ENCODE measurements at regions of chr15 and their contacts with region 1.

Region 1: GRCh38 chr15:65028921-65029735 is at the start of gene MTFMT:
- DNase-seq: peak; percentile 93 to 95
- ATAC-seq: peak; percentile 94 to 98 (median 97)
- H3K4me3 ChIP-seq: peak within 1 kb of the TSS; percentile 45 to 99 (median 94)
- H3K27ac ChIP-seq: peak within 1 kb of the TSS; percentile 8 to 89 (median 84)
- H3K4me1 ChIP-seq: peaks cover 2 to 34% (median 17%) of the 10 kb centered on the region in 9 donors
- H3K27me3 ChIP-seq: no peaks in the 10 kb centered on the region
- CTCF ChIP-seq: peak in 1 of 9 donors; percentile 10
- total RNA-seq, gene MTFMT: 13.5 to 21.9 (median 18.6) TPM

Region 2: DNA sequence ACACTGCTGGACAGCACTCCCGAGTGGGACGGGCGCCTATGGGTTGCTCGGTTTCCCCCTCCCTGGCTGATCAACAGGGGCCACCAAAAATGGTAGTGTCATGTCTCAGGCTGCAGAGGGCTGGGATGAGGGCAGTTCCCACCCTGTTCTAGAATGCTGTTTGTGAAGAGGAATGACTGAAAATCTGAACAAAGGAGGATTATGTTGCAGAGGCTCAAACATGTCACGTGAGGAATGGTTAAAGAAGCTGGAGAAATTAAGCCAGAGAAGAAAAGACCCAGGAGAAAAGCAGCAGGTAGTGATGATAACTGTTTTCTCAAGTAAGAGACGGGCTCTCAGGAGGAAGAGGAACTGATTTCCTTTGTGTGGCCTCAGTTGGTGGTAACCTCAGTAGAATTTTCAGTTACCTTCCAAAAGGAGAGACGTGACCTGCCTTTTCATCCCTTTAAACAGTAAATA is 49.8 kb before region 1 on chr15:
- intact Hi-C with region 1: no loop called
- DNase-seq: no peak
- ATAC-seq: no peak
- H3K4me3 ChIP-seq: no peak overlapping the region
- H3K27ac ChIP-seq: no peak overlapping the region
- H3K4me1 ChIP-seq: peaks cover 0 to 14% (median 0%) of the 10 kb centered on the region in 9 donors
- H3K27me3 ChIP-seq: no peaks in the 10 kb centered on the region
- CTCF ChIP-seq: no peak

Region 3: DNA sequence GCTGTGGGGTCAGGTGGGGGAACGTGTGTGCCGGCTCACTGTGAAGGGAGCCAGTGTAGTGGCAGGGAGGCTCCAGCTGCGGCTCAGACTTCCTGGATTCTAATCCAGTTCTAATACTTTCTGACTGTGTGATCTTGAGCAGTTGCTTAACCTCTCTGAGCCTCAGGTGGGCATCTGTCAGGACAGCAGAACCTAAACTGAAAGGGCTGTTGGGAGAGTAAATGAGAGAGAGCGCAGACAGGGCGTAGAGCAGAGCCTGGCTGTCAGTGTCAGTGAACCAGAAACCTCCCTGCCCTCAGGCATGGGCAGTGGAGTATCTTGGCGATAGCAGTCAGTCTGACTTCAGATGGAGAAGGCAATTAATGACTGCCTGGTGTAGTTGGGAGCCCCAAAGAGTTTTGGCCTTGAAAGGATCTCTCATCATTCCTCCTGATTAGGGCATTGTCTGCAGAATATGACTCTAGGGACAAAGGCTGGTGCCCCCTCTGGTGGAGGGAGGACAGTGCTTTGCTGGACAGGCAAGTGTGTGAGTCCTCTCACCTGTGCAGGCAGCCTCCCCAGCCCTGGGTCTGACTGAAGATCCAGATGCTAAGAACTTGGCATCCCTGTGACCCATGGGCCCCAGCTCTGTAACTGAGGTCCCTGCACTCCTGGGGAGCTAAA is 57.0 kb after region 1 on chr15:
- intact Hi-C with region 1: loop called in 5 of 10 experiments (anchors 5 to 10 kb)
- DNase-seq: no peak
- ATAC-seq: no peak
- H3K4me3 ChIP-seq: no peak overlapping the region
- H3K27ac ChIP-seq: peak overlapping the region in 8 of 10 donors; percentile 76 to 94 (median 88)
- H3K4me1 ChIP-seq: peaks cover 14 to 90% (median 62%) of the 10 kb centered on the region in 9 donors
- H3K27me3 ChIP-seq: peaks cover 0 to 12% (median 0%) of the 10 kb centered on the region in 7 donors
- CTCF ChIP-seq: peak in 6 of 9 donors; percentile 35 to 53 (median 40)

Region 4: DNA sequence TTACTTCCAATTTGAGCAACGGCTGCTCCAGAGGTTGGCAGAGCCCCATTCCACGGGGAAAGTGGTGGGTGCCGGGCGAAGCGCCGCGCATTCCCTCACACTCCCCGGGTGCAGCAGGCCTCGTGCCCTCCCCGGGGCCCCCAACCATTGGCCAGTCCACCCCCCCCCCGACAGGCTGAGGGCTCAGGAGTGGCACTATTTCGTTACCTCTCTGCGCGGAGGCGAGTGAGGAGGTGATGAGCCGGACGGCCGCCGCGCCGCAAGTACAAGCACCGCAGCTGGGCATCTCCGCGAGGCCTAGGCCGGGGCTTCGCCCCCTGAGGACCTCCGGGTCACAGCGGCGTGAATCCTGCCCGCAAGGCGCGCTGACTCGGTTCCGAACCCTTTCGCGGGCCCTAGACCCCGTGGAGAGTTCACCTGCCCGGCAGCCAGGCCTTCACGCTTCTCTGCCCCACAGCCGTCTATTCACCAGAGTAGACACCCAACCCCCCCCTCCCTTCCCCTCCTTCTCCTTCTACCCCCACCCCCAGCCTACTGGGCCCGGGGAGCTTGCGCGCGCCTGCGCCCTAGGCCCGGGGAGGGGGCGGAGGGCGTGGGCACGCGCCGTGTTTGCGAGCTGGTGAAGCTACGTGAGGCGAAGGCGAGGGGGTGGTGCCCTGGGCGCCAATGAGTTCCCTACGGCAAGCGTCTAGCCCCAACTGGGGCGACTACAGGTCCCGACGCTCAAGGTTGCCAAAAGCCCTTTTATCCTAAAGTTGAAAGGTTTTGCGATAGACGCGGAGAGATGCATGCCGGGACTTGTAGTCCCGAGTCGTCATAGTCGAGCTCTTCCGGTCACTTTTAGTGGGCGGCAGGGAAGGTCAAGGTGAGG is 156.0 kb after region 1 on chr15 and contains the start of gene CLPX:
- intact Hi-C with region 1: loop called in 1 of 10 experiments (anchors 5 kb)
- DNase-seq: peak; percentile 91
- ATAC-seq: peak; percentile 94 to 97 (median 97)
- H3K4me3 ChIP-seq: peak within 1 kb of the TSS; percentile 78 to 99 (median 86)
- H3K27ac ChIP-seq: peak within 1 kb of the TSS; percentile 83 to 99 (median 95)
- H3K4me1 ChIP-seq: peaks cover 3 to 39% (median 31%) of the 10 kb centered on the region in 9 donors
- H3K27me3 ChIP-seq: no peaks in the 10 kb centered on the region
- CTCF ChIP-seq: no peak
- total RNA-seq, gene CLPX: 57.8 to 67.6 (median 60.8) TPM

Region 5: GRCh38 chr15:65286704-65287519 is 257.8 kb after region 1 on chr15 and contains the start of gene PARP16:
- intact Hi-C with region 1: loop called in 4 of 10 experiments (anchors 10 kb)
- DNase-seq: peak; percentile 88 to 92
- ATAC-seq: peak; percentile 95 to 97 (median 96)
- H3K4me3 ChIP-seq: peak within 1 kb of the TSS; percentile 49 to 91 (median 78)
- H3K27ac ChIP-seq: peak within 1 kb of the TSS; percentile 50 to 96 (median 93)
- H3K4me1 ChIP-seq: peaks cover 2 to 28% (median 20%) of the 10 kb centered on the region in 9 donors
- H3K27me3 ChIP-seq: no peaks in the 10 kb centered on the region
- CTCF ChIP-seq: peak; percentile 12 to 85 (median 58)
- total RNA-seq, gene PARP16: 3.3 to 5.2 (median 4.8) TPM

Region 6: GRCh38 chr15:65377104-65377975 is 348.2 kb after region 1 on chr15:
- intact Hi-C with region 1: no loop called
- DNase-seq: no peak
- ATAC-seq: peak; percentile 46 to 75 (median 60)
- H3K4me3 ChIP-seq: peak overlapping the region in 9 of 10 donors; percentile 47 to 74 (median 62)
- H3K27ac ChIP-seq: no peak overlapping the region
- H3K4me1 ChIP-seq: peaks cover 8 to 21% (median 18%) of the 10 kb centered on the region in 9 donors
- H3K27me3 ChIP-seq: peaks cover 0 to 83% (median 58%) of the 10 kb centered on the region in 7 donors
- CTCF ChIP-seq: no peak

Measured in heart right ventricle (tissue), 16 donors.